ENCODE measurements at regions of chr14 and their contacts with region 1.

Region 1: DNA sequence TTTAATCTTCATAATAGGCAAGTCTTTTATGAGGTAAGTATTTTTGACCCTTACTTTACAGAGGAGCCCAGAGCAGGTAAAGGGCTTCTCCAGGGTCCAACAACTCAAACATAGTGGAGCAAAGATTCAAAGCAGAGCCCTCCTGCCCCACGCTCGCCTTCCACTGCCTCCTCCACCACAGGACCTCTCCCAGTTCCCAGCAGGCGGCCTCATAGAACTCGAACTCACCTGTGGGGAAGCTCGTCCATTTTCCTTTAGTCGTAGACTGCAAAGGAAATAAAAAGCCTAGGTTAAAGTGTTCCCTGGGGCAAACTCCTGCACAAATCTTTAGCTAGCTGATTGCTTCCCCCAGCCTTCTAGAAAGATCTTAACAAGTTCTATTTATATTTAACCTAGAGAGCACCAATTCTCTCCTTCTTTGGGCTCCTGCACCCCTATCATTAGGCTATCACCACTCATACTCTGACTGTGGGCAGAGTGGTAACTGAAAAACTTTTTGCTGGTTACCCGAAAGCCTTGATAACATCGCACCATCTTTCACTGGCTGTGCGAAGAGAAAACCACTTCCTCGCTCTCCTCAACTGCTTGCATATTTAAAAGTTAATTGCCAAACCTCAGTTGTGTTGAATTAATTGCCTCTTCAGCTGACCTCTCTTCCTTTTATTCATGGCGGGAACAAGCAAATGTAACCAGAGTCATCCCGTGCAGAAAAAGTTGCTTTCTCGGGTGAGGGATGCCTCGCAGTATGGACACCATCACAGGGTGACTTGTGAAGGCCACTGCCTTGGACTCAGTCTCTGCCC is 299.6 kb downstream of the DPF3 start:
- DNase-seq: peak; percentile 70
- H3K4me3 Mint-ChIP-seq: peak overlapping the region; percentile 1
- H3K27ac Mint-ChIP-seq: peak overlapping the region; percentile 38
- H3K4me1 Mint-ChIP-seq: peaks cover 45% of the 10 kb centered on the region
- H3K27me3 Mint-ChIP-seq: peaks cover 49% of the 10 kb centered on the region

Region 2: GRCh38 chr14:72443991-72444441 is 150.3 kb before region 1 on chr14:
- intact Hi-C with region 1: loop called (anchors 5 kb)
- DNase-seq: peak; percentile 31
- H3K4me3 Mint-ChIP-seq: no peak overlapping the region
- H3K27ac Mint-ChIP-seq: peak overlapping the region; percentile 23
- H3K4me1 Mint-ChIP-seq: peaks cover 62% of the 10 kb centered on the region
- H3K27me3 Mint-ChIP-seq: no peaks in the 10 kb centered on the region

Region 3: GRCh38 chr14:72476657-72477499 is 117.4 kb before region 1 on chr14:
- intact Hi-C with region 1: loop called (anchors 2 kb)
- DNase-seq: peak; percentile 80
- H3K4me3 Mint-ChIP-seq: peak overlapping the region; percentile 35
- H3K27ac Mint-ChIP-seq: peak overlapping the region; percentile 73
- H3K4me1 Mint-ChIP-seq: peaks cover 69% of the 10 kb centered on the region
- H3K27me3 Mint-ChIP-seq: peaks cover 5% of the 10 kb centered on the region

Region 4: GRCh38 chr14:72535485-72535884 is 58.8 kb before region 1 on chr14:
- intact Hi-C with region 1: loop called (anchors 5 kb)
- DNase-seq: no peak
- H3K4me3 Mint-ChIP-seq: no peak overlapping the region
- H3K27ac Mint-ChIP-seq: no peak overlapping the region
- H3K4me1 Mint-ChIP-seq: peaks cover 26% of the 10 kb centered on the region
- H3K27me3 Mint-ChIP-seq: peaks cover 48% of the 10 kb centered on the region

Region 5: GRCh38 chr14:72608391-72609204 is 14.3 kb after region 1 on chr14:
- intact Hi-C with region 1: no loop called
- DNase-seq: no peak
- H3K4me3 Mint-ChIP-seq: no peak overlapping the region
- H3K27ac Mint-ChIP-seq: no peak overlapping the region
- H3K4me1 Mint-ChIP-seq: no peaks in the 10 kb centered on the region
- H3K27me3 Mint-ChIP-seq: peaks cover 59% of the 10 kb centered on the region

Region 6: GRCh38 chr14:72893636-72894321 is 299.5 kb after region 1 on chr14 and contains the start of gene DPF3:
- intact Hi-C with region 1: loop called (anchors 5 kb)
- DNase-seq: peak; percentile 91
- H3K4me3 Mint-ChIP-seq: peak within 1 kb of the TSS; percentile 89
- H3K27ac Mint-ChIP-seq: no peak within 1 kb of the TSS
- H3K4me1 Mint-ChIP-seq: peaks cover 24% of the 10 kb centered on the region
- H3K27me3 Mint-ChIP-seq: peaks cover 70% of the 10 kb centered on the region
- total RNA-seq, gene DPF3: 0.62 and 0.66 TPM in 2 replicates